IMR-90 (cell line): ENCODE measurements at regions of chr5 and their contacts with region 1.

Region 1: GRCh38 chr5:59673438-59674058 is 220.0 kb downstream of the PDE4D start:
- DNase-seq: peak; percentile 49
- ATAC-seq: peak; percentile 60
- H3K4me3 ChIP-seq: no peak overlapping the region
- H3K27ac ChIP-seq: no peak overlapping the region
- H3K4me1 ChIP-seq: no peaks in the 10 kb centered on the region
- H3K27me3 ChIP-seq: no peaks in the 10 kb centered on the region
- CTCF ChIP-seq: peak; percentile 78
- POLR2A ChIP-seq: no peak
- RAD21 ChIP-seq: peak; percentile 71

Region 2: GRCh38 chr5:59799668-59800346 is 126.3 kb after region 1 on chr5:
- CTCF ChIA-PET with region 1: no interaction called
- POLR2A ChIA-PET with region 1: no interaction called
- dilution Hi-C with region 1: no loop called
- in situ Hi-C with region 1: no loop called
- intact Hi-C with region 1: loop called (anchors 1 kb)
- DNase-seq: peak; percentile 57
- ATAC-seq: peak; percentile 81
- H3K4me3 ChIP-seq: no peak overlapping the region
- H3K27ac ChIP-seq: no peak overlapping the region
- H3K4me1 ChIP-seq: no peaks in the 10 kb centered on the region
- H3K27me3 ChIP-seq: no peaks in the 10 kb centered on the region; the same call in none of the 2 replicates
- CTCF ChIP-seq: peak; percentile 83
- POLR2A ChIP-seq: no peak
- RAD21 ChIP-seq: peak; percentile 78